HepG2 (cell line): ENCODE measurements at regions of chr14 and their contacts with region 1.

Region 1: GRCh38 chr14:37399517-37399916 is 195.5 kb downstream of the FOXA1 start:
- DNase-seq: no peak
- ATAC-seq: no peak
- H3K4me3 ChIP-seq: no peak overlapping the region
- H3K27ac ChIP-seq: no peak overlapping the region
- H3K4me1 ChIP-seq: peaks cover under 1% of the 10 kb centered on the region; the same call in 1 of the 2 replicates
- H3K27me3 ChIP-seq: no peaks in the 10 kb centered on the region
- CTCF ChIP-seq: no peak
- EP300 ChIP-seq: no peak
- POLR2A ChIP-seq: no peak
- RAD21 ChIP-seq: no peak

Region 2: DNA sequence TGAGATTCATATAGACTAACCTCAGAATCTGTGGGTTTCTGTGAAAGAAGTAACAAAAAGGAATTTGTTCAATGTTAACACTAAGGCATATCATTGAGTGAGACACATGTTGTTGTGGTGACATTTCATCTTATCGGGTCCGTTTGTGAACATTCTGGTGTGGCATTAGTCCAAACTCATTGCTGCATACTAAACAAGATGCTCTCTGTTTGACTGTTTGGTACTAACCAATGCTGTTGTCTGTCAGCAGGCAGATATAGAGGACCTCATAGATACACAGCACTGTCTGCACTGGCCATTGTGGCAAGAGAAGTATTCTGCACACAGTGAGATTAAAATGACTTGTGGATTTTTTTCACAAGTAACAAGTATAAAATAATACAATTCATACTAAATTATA is 268.3 kb before region 1 on chr14:
- CTCF ChIA-PET with region 1: no interaction called
- POLR2A ChIA-PET with region 1: no interaction called
- in situ Hi-C with region 1: no loop called
- intact Hi-C with region 1: no loop called
- DNase-seq: no peak
- ATAC-seq: no peak
- H3K4me3 ChIP-seq: no peak overlapping the region
- H3K27ac ChIP-seq: no peak overlapping the region
- H3K4me1 ChIP-seq: no peaks in the 10 kb centered on the region
- H3K27me3 ChIP-seq: no peaks in the 10 kb centered on the region
- CTCF ChIP-seq: no peak
- EP300 ChIP-seq: no peak
- POLR2A ChIP-seq: no peak
- RAD21 ChIP-seq: no peak

Region 3: DNA sequence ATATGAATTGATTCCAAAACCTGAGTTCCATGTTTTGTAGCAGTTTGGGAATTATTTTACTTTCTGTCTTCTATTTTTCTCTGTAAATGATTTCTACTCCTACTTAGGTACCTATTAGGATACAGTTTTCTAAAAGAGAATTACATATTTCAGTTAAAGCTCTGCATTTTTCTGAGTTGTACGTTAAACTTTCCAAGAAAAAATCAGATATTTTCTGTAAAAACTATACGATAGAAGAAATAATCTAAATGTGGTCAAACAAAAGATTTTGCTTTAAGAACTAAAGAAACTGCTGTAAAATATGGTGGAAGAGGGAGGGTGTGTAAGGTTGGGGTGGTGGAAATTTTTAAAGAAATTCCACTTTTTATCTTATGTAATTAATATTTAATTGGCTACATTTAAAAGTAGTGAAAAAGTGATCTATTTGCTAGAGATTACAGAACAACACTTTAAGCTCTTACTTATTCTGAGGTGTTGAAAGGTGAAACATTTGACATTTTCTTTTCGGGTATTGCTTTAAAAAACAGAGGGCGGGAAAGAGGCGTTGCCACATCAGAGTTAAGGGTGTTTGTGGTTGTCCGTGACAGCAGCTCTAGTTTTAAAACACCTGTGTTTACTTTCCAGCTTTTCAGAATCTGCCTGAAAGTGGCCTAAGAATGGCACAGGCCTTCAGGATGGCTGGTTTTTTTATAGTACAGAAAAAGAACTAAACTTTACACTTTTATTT is 14.5 kb before region 1 on chr14:
- CTCF ChIA-PET with region 1: no interaction called
- POLR2A ChIA-PET with region 1: no interaction called
- in situ Hi-C with region 1: no loop called
- intact Hi-C with region 1: loop called (anchors 1 kb)
- DNase-seq: peak; percentile 82
- ATAC-seq: peak; percentile 100
- H3K4me3 ChIP-seq: 0 out of 6 replicates have a peak overlapping the region, but pooled peaks of 1 of the 3 experiments have one; percentile 0
- H3K27ac ChIP-seq: peak overlapping the region; percentile 17
- H3K4me1 ChIP-seq: peaks cover 12% of the 10 kb centered on the region
- H3K27me3 ChIP-seq: no peaks in the 10 kb centered on the region
- CTCF ChIP-seq: no peak
- EP300 ChIP-seq: peak in 1 of 2 experiments; percentile 78; a peak in 2 of 4 replicates
- POLR2A ChIP-seq: no peak
- RAD21 ChIP-seq: no peak

Region 4: GRCh38 chr14:37466623-37467088 is 67.1 kb after region 1 on chr14:
- CTCF ChIA-PET with region 1: no interaction called
- POLR2A ChIA-PET with region 1: no interaction called
- in situ Hi-C with region 1: no loop called
- intact Hi-C with region 1: no loop called
- DNase-seq: peak; percentile 100
- ATAC-seq: peak; percentile 97
- H3K4me3 ChIP-seq: peak overlapping the region in 1 of 3 experiments; percentile 12; a peak in 2 of 6 replicates
- H3K27ac ChIP-seq: peak overlapping the region; percentile 81
- H3K4me1 ChIP-seq: peaks cover 46% of the 10 kb centered on the region
- H3K27me3 ChIP-seq: no peaks in the 10 kb centered on the region
- CTCF ChIP-seq: no peak
- EP300 ChIP-seq: peak; percentile 100
- POLR2A ChIP-seq: no peak
- RAD21 ChIP-seq: peak; percentile 67